H1 (cell line): ENCODE measurements at regions of chr19 and their contacts with region 1.

Region 1: DNA sequence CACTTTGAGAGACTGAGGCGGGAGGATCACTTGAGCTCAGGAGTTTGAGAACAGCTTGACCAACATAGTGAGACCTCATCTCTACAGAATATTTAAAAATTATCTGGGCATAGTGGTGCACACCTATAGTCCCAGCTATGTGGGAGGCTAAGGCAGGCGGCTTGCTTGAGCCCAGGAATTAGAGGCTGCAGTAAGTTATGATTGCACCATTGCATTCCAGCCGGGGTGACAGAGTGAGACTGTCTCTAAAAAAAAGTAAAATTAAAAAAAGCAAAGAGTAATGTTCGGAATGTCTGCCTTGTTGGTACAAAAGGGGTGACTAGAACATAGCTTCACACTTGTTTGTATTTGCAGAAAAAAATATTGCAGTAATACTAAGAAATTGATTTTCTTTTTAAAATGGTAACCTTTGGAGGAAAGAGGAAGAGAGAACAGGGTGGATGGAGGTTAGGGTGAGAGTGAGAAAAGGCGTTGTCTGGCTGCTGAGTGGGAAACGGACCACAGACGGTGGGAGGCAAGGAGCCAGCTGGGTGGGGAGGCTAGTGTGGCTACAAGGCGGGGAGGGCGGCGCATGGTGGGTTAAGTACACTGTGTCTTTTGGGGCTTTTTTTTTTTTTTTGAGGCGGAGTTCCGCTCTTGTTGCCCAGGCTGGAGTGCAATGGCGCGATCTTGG is 10.2 kb downstream of the PPP1R14A start:
- DNase-seq: no peak
- H3K4me3 ChIP-seq: no peak overlapping the region
- H3K27ac ChIP-seq: no peak overlapping the region
- H3K4me1 ChIP-seq: peaks cover 4 to 10% (median 8%) of the 10 kb centered on the region in 4 experiments
- H3K27me3 ChIP-seq: no peaks in the 10 kb centered on the region; a peak in 2 of 7 replicates
- CTCF ChIP-seq: no peak
- EP300 ChIP-seq: no peak
- POLR2A ChIP-seq: no peak
- RAD21 ChIP-seq: no peak

Region 2: GRCh38 chr19:38173291-38174041 is 72.5 kb before region 1 on chr19:
- CTCF ChIA-PET with region 1: no interaction called
- POLR2A ChIA-PET with region 1: no interaction called
- DNase-seq: no peak
- H3K4me3 ChIP-seq: no peak overlapping the region
- H3K27ac ChIP-seq: no peak overlapping the region
- H3K4me1 ChIP-seq: peaks cover 2 to 9% (median 4%) of the 10 kb centered on the region in 4 experiments
- H3K27me3 ChIP-seq: no peaks in the 10 kb centered on the region
- CTCF ChIP-seq: no peak
- EP300 ChIP-seq: no peak
- POLR2A ChIP-seq: no peak
- RAD21 ChIP-seq: no peak

Region 3: GRCh38 chr19:38229585-38230073 is 16.3 kb before region 1 on chr19:
- CTCF ChIA-PET with region 1: interaction called, 45 read pairs
- POLR2A ChIA-PET with region 1: interaction called, 10 read pairs
- DNase-seq: peak in 1 of 2 experiments; percentile 85
- H3K4me3 ChIP-seq: peak overlapping the region; percentile 5 to 86 (median 40); a peak in 5 of 8 replicates
- H3K27ac ChIP-seq: no peak overlapping the region
- H3K4me1 ChIP-seq: peaks cover 6 to 19% (median 13%) of the 10 kb centered on the region in 4 experiments
- H3K27me3 ChIP-seq: peaks cover 0 to 10% (median 5%) of the 10 kb centered on the region in 4 experiments; a peak in 3 of 7 replicates
- CTCF ChIP-seq: no peak
- EP300 ChIP-seq: no peak
- POLR2A ChIP-seq: no peak
- RAD21 ChIP-seq: no peak

Region 4: GRCh38 chr19:38284422-38284821 is 38.5 kb after region 1 on chr19:
- CTCF ChIA-PET with region 1: interaction called, 10 read pairs
- POLR2A ChIA-PET with region 1: no interaction called
- DNase-seq: no peak
- H3K4me3 ChIP-seq: no peak overlapping the region
- H3K27ac ChIP-seq: no peak overlapping the region
- H3K4me1 ChIP-seq: no peaks in the 10 kb centered on the region
- H3K27me3 ChIP-seq: no peaks in the 10 kb centered on the region
- CTCF ChIP-seq: no peak
- EP300 ChIP-seq: no peak
- POLR2A ChIP-seq: no peak
- RAD21 ChIP-seq: no peak

Region 5: GRCh38 chr19:38329651-38330050 is 83.7 kb after region 1 on chr19:
- CTCF ChIA-PET with region 1: interaction called, 100 read pairs
- POLR2A ChIA-PET with region 1: interaction called, 5 read pairs
- DNase-seq: no peak
- H3K4me3 ChIP-seq: no peak overlapping the region
- H3K27ac ChIP-seq: no peak overlapping the region
- H3K4me1 ChIP-seq: no peaks in the 10 kb centered on the region
- H3K27me3 ChIP-seq: no peaks in the 10 kb centered on the region
- CTCF ChIP-seq: no peak
- EP300 ChIP-seq: no peak
- POLR2A ChIP-seq: no peak
- RAD21 ChIP-seq: no peak

Region 6: DNA sequence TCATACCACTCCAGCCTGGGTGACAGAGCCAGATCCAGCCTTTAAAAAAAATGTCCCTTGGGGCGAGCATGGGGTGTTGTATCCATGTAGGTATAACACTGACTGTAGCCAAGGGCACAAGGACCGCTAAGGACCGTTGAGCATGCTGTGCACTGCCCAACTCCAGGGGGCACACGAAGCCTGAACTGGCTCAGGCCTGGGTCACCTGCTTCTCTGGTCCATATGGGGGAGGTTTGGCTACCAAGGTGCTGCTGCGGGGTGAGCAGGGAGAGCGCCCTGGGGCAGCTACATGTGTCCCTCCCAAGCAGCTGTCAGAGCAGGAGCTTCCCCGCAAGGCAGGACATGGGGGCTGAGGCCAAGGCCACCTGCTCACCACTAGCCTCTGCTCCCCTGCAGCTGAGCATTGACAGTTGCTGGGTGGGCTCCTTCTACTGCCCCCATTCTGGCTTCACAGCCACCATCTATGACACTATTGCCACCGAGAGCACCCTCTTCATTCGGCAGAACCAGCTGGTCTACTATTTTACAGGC is 106.0 kb after region 1 on chr19:
- CTCF ChIA-PET with region 1: no interaction called
- POLR2A ChIA-PET with region 1: no interaction called
- DNase-seq: no peak
- H3K4me3 ChIP-seq: no peak overlapping the region
- H3K27ac ChIP-seq: no peak overlapping the region
- H3K4me1 ChIP-seq: no peaks in the 10 kb centered on the region
- H3K27me3 ChIP-seq: no peaks in the 10 kb centered on the region; a peak in 1 of 7 replicates
- CTCF ChIP-seq: no peak
- EP300 ChIP-seq: no peak
- POLR2A ChIP-seq: no peak
- RAD21 ChIP-seq: no peak

Region 7: GRCh38 chr19:38374429-38375176 is 128.6 kb after region 1 on chr19 and contains the start of gene PSMD8:
- CTCF ChIA-PET with region 1: interaction called, 28 read pairs
- POLR2A ChIA-PET with region 1: interaction called, 6 read pairs
- DNase-seq: peak; percentile 96 to 99
- H3K4me3 ChIP-seq: peak within 1 kb of the TSS; percentile 85 to 96 (median 90)
- H3K27ac ChIP-seq: peak within 1 kb of the TSS; percentile 62; the same call in 1 of the 2 replicates
- H3K4me1 ChIP-seq: peaks cover 0 to 6% (median 3%) of the 10 kb centered on the region in 4 experiments; a peak in 3 of 7 replicates
- H3K27me3 ChIP-seq: peaks cover 0 to 2% (median 0%) of the 10 kb centered on the region in 4 experiments; a peak in 2 of 7 replicates
- CTCF ChIP-seq: peak in 2 of 3 experiments; percentile 14 to 25; a peak in 2 of 4 replicates
- EP300 ChIP-seq: no peak
- POLR2A ChIP-seq: peak; percentile 93 to 94
- RAD21 ChIP-seq: peak; percentile 10 to 13; a peak in 3 of 4 replicates
- total RNA-seq, gene PSMD8: 170 and 183 TPM in 2 replicates